Activated CD4-positive, alpha-beta T cell treated with anti-CD3 and anti-CD28 coated beads for 36 hours (primary cell): ENCODE measurements at regions of chr2 and their contacts with region 1.

Region 1: GRCh38 chr2:54106631-54107454 is 8.6 kb upstream of the ACYP2 start:
- DNase-seq: peak; percentile 61
- ATAC-seq: peak; percentile 82
- H3K4me3 Mint-ChIP-seq: no peak overlapping the region
- H3K27ac Mint-ChIP-seq: no peak overlapping the region
- H3K4me1 Mint-ChIP-seq: peaks cover 9% of the 10 kb centered on the region
- H3K27me3 Mint-ChIP-seq: peaks cover 2% of the 10 kb centered on the region

Region 2: DNA sequence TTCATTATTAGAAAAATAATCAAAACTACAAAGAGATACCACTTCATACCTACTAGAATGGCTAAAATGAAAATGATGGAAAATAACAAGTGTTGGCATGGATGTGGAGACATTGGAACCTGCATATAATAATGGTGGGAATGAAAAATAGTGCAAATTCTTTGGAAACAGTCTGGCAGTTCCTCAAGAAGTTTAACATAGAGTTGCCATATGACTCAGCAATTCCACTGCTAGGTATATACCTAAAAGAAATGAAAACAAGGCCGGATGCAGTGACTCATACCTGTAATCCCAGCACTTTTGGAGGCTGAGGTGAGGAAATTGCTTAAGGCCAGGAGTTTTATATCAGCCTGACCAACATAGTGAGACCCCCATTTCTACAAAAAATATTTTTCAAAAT is 33.0 kb before region 1 on chr2:
- CTCF ChIA-PET with region 1: no interaction called
- POLR2A ChIA-PET with region 1: no interaction called
- intact Hi-C with region 1: no loop called
- DNase-seq: peak; percentile 13
- ATAC-seq: peak; percentile 51
- H3K4me3 Mint-ChIP-seq: no peak overlapping the region
- H3K27ac Mint-ChIP-seq: no peak overlapping the region
- H3K4me1 Mint-ChIP-seq: peaks cover 8% of the 10 kb centered on the region
- H3K27me3 Mint-ChIP-seq: no peaks in the 10 kb centered on the region

Region 3: DNA sequence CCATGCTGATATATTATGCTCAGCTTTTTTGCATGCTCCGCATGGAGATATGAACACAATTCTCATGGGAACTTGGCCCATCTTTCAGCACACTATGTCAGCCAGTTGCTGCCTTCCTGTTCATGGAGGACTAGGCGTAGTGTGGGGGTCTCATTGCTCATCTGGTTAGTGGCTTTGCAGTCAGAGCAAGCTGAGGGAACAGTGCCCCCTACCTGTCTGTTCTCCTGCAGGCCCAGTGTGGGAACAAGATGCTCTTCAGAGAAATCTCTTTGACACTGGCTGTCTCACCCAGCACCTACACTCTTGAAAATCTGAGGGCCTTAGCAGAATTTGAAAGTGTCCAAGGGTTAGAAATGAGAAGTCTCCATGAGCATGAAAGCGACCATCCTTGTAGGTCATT is 396.3 kb after region 1 on chr2:
- CTCF ChIA-PET with region 1: interaction called, 4 read pairs
- POLR2A ChIA-PET with region 1: no interaction called
- intact Hi-C with region 1: loop called (anchors 1 to 5 kb)
- DNase-seq: peak; percentile 64
- ATAC-seq: peak; percentile 49
- H3K4me3 Mint-ChIP-seq: no peak overlapping the region
- H3K27ac Mint-ChIP-seq: no peak overlapping the region
- H3K4me1 Mint-ChIP-seq: no peaks in the 10 kb centered on the region
- H3K27me3 Mint-ChIP-seq: no peaks in the 10 kb centered on the region

Region 4: DNA sequence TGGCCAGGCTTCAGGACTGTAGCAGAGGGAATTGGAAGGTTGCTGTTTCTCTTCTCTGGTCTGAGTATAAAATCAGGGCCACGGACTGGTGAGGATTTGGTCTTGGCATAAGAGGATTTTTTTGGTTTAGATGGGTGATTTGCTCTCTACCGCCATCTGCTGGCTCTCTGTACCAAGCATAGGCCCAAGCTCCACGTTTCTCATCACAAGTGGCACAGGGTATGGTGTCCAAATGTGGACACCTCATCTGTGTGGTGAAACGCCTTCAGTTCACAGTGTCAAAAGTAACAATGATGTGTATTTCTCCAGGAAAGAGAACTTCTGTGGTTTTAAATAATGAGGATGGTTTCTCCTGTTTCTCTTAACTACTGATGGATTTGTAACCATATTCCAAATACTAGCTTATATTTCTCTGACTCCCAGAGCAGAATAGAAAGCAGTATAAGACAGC is 731.8 kb after region 1 on chr2:
- CTCF ChIA-PET with region 1: interaction called, 6 read pairs
- POLR2A ChIA-PET with region 1: no interaction called
- intact Hi-C with region 1: loop called (anchors 1 to 5 kb)
- DNase-seq: peak; percentile 79
- ATAC-seq: peak; percentile 97
- H3K4me3 Mint-ChIP-seq: no peak overlapping the region
- H3K27ac Mint-ChIP-seq: no peak overlapping the region
- H3K4me1 Mint-ChIP-seq: no peaks in the 10 kb centered on the region
- H3K27me3 Mint-ChIP-seq: no peaks in the 10 kb centered on the region